ENCODE measurements at regions of chr15 and their contacts with region 1.

Region 1: GRCh38 chr15:43390723-43391122 is 19.8 kb downstream of the TUBGCP4 start:
- DNase-seq: no peak
- ATAC-seq: no peak
- H3K4me3 Mint-ChIP-seq: no peak overlapping the region
- H3K27ac Mint-ChIP-seq: no peak overlapping the region
- H3K4me1 Mint-ChIP-seq: no peaks in the 10 kb centered on the region
- H3K27me3 Mint-ChIP-seq: no peaks in the 10 kb centered on the region
- CTCF ChIP-seq: no peak

Region 2: GRCh38 chr15:43376017-43376705 is 14.6 kb before region 1 on chr15:
- CTCF ChIA-PET with region 1: interaction called, 11 read pairs
- POLR2A ChIA-PET with region 1: interaction called, 3 read pairs
- intact Hi-C with region 1: no loop called
- DNase-seq: peak; percentile 61
- ATAC-seq: peak; percentile 76
- H3K4me3 Mint-ChIP-seq: no peak overlapping the region
- H3K27ac Mint-ChIP-seq: no peak overlapping the region
- H3K4me1 Mint-ChIP-seq: peaks cover 28% of the 10 kb centered on the region
- H3K27me3 Mint-ChIP-seq: no peaks in the 10 kb centered on the region
- CTCF ChIP-seq: peak; percentile 90

Region 3: DNA sequence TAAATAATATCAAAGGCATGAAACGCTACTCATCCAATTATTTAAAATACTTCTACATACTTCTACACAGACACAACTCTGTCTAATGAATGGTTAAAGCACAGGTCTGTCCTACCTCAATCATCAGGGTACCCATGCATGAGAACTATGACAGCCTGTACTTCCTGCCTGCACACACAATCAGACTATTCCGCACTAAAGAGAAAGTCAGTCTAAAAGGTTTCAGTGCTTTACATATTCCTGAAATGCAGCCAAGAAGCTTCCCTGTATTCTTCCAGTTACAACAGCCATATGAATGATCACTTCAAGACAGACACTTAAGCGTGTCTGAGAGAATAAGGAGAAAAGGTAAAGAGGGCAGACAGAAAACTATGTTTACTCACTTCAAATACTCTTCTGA is 39.0 kb after region 1 on chr15:
- CTCF ChIA-PET with region 1: no interaction called
- POLR2A ChIA-PET with region 1: no interaction called
- intact Hi-C with region 1: no loop called
- DNase-seq: no peak
- ATAC-seq: no peak
- H3K4me3 Mint-ChIP-seq: no peak overlapping the region
- H3K27ac Mint-ChIP-seq: no peak overlapping the region
- H3K4me1 Mint-ChIP-seq: no peaks in the 10 kb centered on the region
- H3K27me3 Mint-ChIP-seq: no peaks in the 10 kb centered on the region
- CTCF ChIP-seq: no peak

Measured in activated CD8-positive, alpha-beta T cell treated with anti-CD3 and anti-CD28 coated beads for 36 hours (primary cell).